Testis (tissue), 5 donors: ENCODE measurements at regions of chr7 and their contacts with region 1.

Region 1: GRCh38 chr7:131107337-131108211 is 220.1 kb upstream of the MKLN1 start:
- DNase-seq: peak; percentile 93
- H3K4me3 ChIP-seq: peak overlapping the region; percentile 92 to 100
- H3K27ac ChIP-seq: peak overlapping the region; percentile 99 to 100
- H3K4me1 ChIP-seq: peaks cover 45% of the 10 kb centered on the region
- H3K27me3 ChIP-seq: no peaks in the 10 kb centered on the region
- CTCF ChIP-seq: no peak
- POLR2A ChIP-seq: peak; percentile 80

Region 2: GRCh38 chr7:130752424-130752823 is 355.1 kb before region 1 on chr7:
- intact Hi-C with region 1: no loop called
- DNase-seq: no peak
- H3K4me3 ChIP-seq: no peak overlapping the region
- H3K27ac ChIP-seq: no peak overlapping the region
- H3K4me1 ChIP-seq: no peaks in the 10 kb centered on the region
- H3K27me3 ChIP-seq: no peaks in the 10 kb centered on the region
- CTCF ChIP-seq: no peak
- POLR2A ChIP-seq: no peak

Region 3: GRCh38 chr7:130896898-130897514 is 210.6 kb before region 1 on chr7:
- intact Hi-C with region 1: loop called (anchors 10 kb)
- DNase-seq: peak; percentile 73
- H3K4me3 ChIP-seq: no peak overlapping the region
- H3K27ac ChIP-seq: peak overlapping the region; percentile 31 to 50
- H3K4me1 ChIP-seq: peaks cover 55% of the 10 kb centered on the region
- H3K27me3 ChIP-seq: no peaks in the 10 kb centered on the region
- CTCF ChIP-seq: peak; percentile 66 to 83 (median 74)
- POLR2A ChIP-seq: no peak

Region 4: GRCh38 chr7:131507592-131508331 is 400.2 kb after region 1 on chr7:
- intact Hi-C with region 1: loop called (anchors 10 kb)
- DNase-seq: peak; percentile 93
- H3K4me3 ChIP-seq: no peak overlapping the region
- H3K27ac ChIP-seq: no peak overlapping the region
- H3K4me1 ChIP-seq: peaks cover 22% of the 10 kb centered on the region
- H3K27me3 ChIP-seq: no peaks in the 10 kb centered on the region
- CTCF ChIP-seq: peak; percentile 89 to 95 (median 90)
- POLR2A ChIP-seq: no peak